GM12878 (cell line): ENCODE measurements at regions of chr2 and their contacts with region 1.

Region 1: GRCh38 chr2:64426183-64426952 is 27.6 kb upstream of the LGALSL start:
- DNase-seq: no peak
- ATAC-seq: no peak
- H3K4me3 ChIP-seq: no peak overlapping the region
- H3K27ac ChIP-seq: no peak overlapping the region
- H3K4me1 ChIP-seq: no peaks in the 10 kb centered on the region
- H3K27me3 ChIP-seq: no peaks in the 10 kb centered on the region
- CTCF ChIP-seq: no peak
- EP300 ChIP-seq: no peak
- POLR2A ChIP-seq: no peak
- RAD21 ChIP-seq: no peak

Region 2: GRCh38 chr2:64474121-64474571 is 47.8 kb after region 1 on chr2:
- CTCF ChIA-PET with region 1: no interaction called
- POLR2A ChIA-PET with region 1: no interaction called
- RAD21 ChIA-PET with region 1: no interaction called
- SMC1A ChIA-PET with region 1: no interaction called
- in situ Hi-C with region 1: loop called (anchors 5 kb)
- intact Hi-C with region 1: no loop called
- DNase-seq: no peak
- ATAC-seq: peak; percentile 79
- H3K4me3 ChIP-seq: no peak overlapping the region
- H3K27ac ChIP-seq: no peak overlapping the region
- H3K4me1 ChIP-seq: peaks cover 5% of the 10 kb centered on the region; the same call in 1 of the 2 replicates
- H3K27me3 ChIP-seq: no peaks in the 10 kb centered on the region
- CTCF ChIP-seq: no peak
- EP300 ChIP-seq: no peak
- POLR2A ChIP-seq: no peak
- RAD21 ChIP-seq: no peak

Region 3: DNA sequence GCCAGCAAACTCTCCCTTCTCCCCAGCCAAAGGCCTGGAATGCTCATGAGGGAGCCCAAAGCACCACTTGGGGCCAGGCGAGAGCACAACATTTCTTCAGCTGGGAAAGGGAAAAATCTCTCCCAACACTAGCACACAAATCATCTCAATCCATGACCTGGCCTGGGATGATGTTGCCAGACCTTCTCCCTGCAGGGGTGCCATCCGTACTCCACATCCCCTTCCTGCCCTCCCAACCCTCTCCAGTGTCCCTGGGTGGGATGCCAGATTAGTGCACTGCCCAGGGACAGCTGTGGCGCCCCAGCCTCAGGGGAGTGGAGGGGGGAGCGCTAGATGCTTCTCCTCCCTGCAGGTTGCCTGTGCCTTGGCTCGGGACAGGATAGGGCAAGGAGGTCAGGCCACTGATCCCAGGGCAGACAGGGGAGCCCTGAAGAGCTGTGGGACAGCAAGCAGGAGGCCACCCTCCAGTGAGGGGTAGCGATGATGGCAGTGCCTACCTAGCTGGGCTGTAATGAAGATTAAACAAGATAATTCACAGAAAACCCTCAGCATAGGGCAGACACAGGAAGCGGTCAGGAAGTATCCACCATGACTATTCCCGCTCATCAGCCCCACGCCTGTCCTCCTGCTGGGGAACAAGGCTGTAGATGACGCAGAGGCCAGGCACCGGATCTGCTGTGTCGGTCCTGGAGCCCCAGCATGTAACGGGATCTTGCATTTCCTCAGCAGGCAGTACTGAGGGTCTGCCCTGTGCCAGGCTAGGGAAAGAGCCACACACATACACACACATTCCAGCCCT is 196.3 kb after region 1 on chr2:
- CTCF ChIA-PET with region 1: no interaction called
- POLR2A ChIA-PET with region 1: no interaction called
- RAD21 ChIA-PET with region 1: no interaction called
- SMC1A ChIA-PET with region 1: no interaction called
- in situ Hi-C with region 1: no loop called
- intact Hi-C with region 1: no loop called
- DNase-seq: no peak
- ATAC-seq: no peak
- H3K4me3 ChIP-seq: no peak overlapping the region
- H3K27ac ChIP-seq: no peak overlapping the region
- H3K4me1 ChIP-seq: peaks cover 8% of the 10 kb centered on the region
- H3K27me3 ChIP-seq: no peaks in the 10 kb centered on the region
- CTCF ChIP-seq: no peak
- EP300 ChIP-seq: no peak
- POLR2A ChIP-seq: no peak
- RAD21 ChIP-seq: no peak